ENCODE measurements at regions of chr14 and their contacts with region 1.

Region 1: DNA sequence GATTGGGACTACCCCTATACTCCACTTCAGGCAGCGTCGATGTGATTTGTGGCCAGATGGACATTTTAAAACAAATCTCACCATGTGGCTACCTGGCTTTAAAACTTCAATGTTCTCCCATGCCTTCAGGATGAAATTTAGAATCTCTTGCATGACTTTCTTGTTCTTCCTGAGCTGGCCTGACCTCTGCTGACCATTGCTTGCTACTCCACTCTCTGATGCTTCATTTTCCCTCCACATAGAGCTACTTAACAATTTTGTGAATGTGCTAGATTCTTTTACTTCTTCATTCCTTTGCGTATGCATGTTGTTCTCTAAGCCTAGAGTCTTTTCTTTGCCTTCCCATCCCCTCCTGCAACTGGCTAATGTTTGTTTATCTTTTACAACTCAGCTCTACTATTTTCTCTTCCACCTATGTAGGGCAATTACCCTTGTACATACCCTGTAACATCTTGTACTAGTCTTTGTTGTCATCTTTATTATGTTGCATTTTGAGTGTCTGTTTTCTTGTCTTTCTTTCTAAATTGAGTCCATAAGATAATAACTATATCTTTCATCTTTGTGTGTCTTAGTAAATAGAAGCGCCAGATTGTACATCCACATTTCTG is 41.2 kb downstream of the YLPM1 start:
- DNase-seq: no peak
- ATAC-seq: peak; percentile 48; the same call in 1 of the 2 replicates
- H3K4me3 Mint-ChIP-seq: no peak overlapping the region
- H3K27ac Mint-ChIP-seq: no peak overlapping the region; the same call in 1 of the 2 replicates
- H3K4me1 Mint-ChIP-seq: no peaks in the 10 kb centered on the region
- H3K27me3 Mint-ChIP-seq: no peaks in the 10 kb centered on the region
- CTCF ChIP-seq: no peak

Region 2: GRCh38 chr14:74793506-74794168 is 10.7 kb before region 1 on chr14:
- CTCF ChIA-PET with region 1: interaction called, 14 read pairs
- POLR2A ChIA-PET with region 1: no interaction called
- DNase-seq: no peak
- ATAC-seq: peak; percentile 35; the same call in 1 of the 2 replicates
- H3K4me3 Mint-ChIP-seq: 0 out of 2 replicates have a peak overlapping the region, but pooled peaks have one; percentile 0
- H3K27ac Mint-ChIP-seq: peak overlapping the region; percentile 46; the same call in 1 of the 2 replicates
- H3K4me1 Mint-ChIP-seq: peaks cover 40% of the 10 kb centered on the region
- H3K27me3 Mint-ChIP-seq: no peaks in the 10 kb centered on the region
- CTCF ChIP-seq: no peak